Activated CD4-positive, alpha-beta memory T cell treated with anti-CD3 and anti-CD28 coated beads for 36 hours (primary cell): ENCODE measurements at regions of chr1 and their contacts with region 1.

Region 1: GRCh38 chr1:25148673-25149300 is 83.5 kb downstream of the SYF2 start:
- DNase-seq: peak; percentile 37
- H3K4me3 Mint-ChIP-seq: no peak overlapping the region
- H3K27ac Mint-ChIP-seq: no peak overlapping the region
- H3K4me1 Mint-ChIP-seq: no peaks in the 10 kb centered on the region
- H3K27me3 Mint-ChIP-seq: peaks cover 25% of the 10 kb centered on the region

Region 2: GRCh38 chr1:25117233-25117823 is 31.5 kb before region 1 on chr1:
- CTCF ChIA-PET with region 1: interaction called, 13 read pairs
- POLR2A ChIA-PET with region 1: no interaction called
- intact Hi-C with region 1: no loop called
- DNase-seq: peak; percentile 58
- H3K4me3 Mint-ChIP-seq: no peak overlapping the region
- H3K27ac Mint-ChIP-seq: no peak overlapping the region
- H3K4me1 Mint-ChIP-seq: peaks cover 28% of the 10 kb centered on the region
- H3K27me3 Mint-ChIP-seq: no peaks in the 10 kb centered on the region

Region 3: DNA sequence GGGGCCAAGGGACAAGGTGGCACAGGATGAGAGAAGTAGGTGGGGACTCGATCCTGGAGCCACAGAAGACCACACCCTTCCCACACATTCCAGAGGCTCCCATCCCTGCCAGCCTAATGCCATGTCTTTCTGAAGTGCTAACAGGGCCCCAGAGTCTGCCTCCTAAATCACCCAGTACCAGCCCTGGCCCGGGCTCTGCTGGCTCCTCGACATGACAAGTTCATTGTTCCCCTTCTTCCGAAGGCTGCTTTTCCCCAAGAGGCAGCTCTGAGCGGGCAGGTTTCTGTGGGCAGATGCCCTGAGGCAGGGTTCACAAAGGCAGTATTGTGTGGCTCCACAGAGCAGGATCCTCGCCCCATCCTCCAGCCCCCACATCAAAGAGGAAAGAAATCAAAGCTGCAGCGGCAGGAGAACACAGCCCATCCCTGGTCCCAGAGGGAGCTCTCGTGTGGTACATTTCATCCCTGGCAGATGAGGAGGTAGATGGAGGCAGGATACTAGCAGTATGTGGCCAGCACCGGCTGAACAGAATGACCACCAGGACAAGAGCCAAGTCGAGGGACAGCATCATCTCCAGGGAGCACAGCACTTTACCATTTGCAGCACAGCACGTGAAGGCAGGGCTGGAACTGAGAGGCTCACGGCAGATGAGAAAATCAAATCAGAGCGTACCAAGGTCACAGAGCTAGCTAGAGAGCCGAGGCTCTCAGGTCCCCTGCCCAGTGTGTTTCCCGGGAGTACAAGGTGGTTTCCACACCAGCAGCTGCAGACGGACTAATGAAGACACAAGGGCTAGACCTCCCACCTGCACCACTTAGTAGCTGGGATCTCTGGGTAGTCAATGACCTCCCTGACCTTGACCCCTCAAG is 18.8 kb after region 1 on chr1:
- CTCF ChIA-PET with region 1: no interaction called
- POLR2A ChIA-PET with region 1: no interaction called
- intact Hi-C with region 1: no loop called
- DNase-seq: no peak
- H3K4me3 Mint-ChIP-seq: no peak overlapping the region
- H3K27ac Mint-ChIP-seq: no peak overlapping the region
- H3K4me1 Mint-ChIP-seq: no peaks in the 10 kb centered on the region
- H3K27me3 Mint-ChIP-seq: no peaks in the 10 kb centered on the region

Region 4: DNA sequence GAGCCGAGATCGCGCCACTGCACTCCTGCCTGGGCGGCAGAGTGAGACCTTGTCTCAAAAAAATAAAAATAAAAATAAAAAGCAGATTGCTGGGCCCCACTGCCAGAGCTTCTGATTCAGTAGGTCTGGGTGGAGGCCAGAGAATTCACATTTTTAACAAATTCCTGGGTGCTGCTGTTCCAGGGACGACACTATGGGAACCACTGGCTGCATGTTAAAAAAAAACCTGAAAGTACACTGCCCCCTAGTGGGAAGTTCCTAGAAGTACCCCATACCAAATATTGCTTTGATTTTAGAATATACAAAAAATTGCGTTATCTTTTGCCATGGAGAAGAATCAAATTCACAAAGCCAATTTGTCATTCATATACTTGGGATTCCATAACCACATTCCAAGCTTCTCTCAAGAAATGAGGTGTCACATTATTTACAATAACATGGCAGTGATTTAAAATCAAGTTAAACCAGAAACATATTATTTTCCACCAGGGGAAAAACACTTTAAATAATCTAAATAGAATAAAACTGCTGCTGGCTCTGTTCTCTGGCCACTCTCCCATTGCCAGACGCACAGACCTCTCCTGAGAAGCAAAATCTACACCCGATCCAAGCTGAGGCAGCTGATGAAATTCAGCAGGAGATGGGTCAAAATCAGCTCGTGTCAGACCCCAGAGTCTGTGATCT is 56.2 kb after region 1 on chr1:
- CTCF ChIA-PET with region 1: interaction called, 8 read pairs
- POLR2A ChIA-PET with region 1: no interaction called
- intact Hi-C with region 1: loop called (anchors 1 kb)
- DNase-seq: no peak
- H3K4me3 Mint-ChIP-seq: no peak overlapping the region
- H3K27ac Mint-ChIP-seq: no peak overlapping the region
- H3K4me1 Mint-ChIP-seq: no peaks in the 10 kb centered on the region
- H3K27me3 Mint-ChIP-seq: peaks cover under 1% of the 10 kb centered on the region